Pancreas (tissue), 10 donors: ENCODE measurements at regions of chr10 and their contacts with region 1.

Region 1: GRCh38 chr10:30783939-30784500 is 154.5 kb upstream of the LYZL2 start:
- DNase-seq: peak in 5 of 6 donors; percentile 47 to 88 (median 71)
- ATAC-seq: peak; percentile 76 to 93 (median 88)
- H3K4me3 ChIP-seq: peak overlapping the region in 2 of 4 donors; percentile 59 to 74
- H3K27ac ChIP-seq: peak overlapping the region in 3 of 4 donors; percentile 6 to 88 (median 82)
- H3K4me1 ChIP-seq: peaks cover 0 to 5% (median 0%) of the 10 kb centered on the region in 3 donors
- H3K27me3 ChIP-seq: no peaks in the 10 kb centered on the region
- CTCF ChIP-seq: peak; percentile 24 to 74 (median 63)

Region 2: GRCh38 chr10:31479752-31480151 is 695.7 kb after region 1 on chr10:
- intact Hi-C with region 1: loop called in 1 of 3 experiments (anchors 10 kb)
- DNase-seq: no peak
- ATAC-seq: no peak
- H3K4me3 ChIP-seq: no peak overlapping the region
- H3K27ac ChIP-seq: no peak overlapping the region
- H3K4me1 ChIP-seq: peaks cover 0 to 8% (median 6%) of the 10 kb centered on the region in 3 donors
- H3K27me3 ChIP-seq: no peaks in the 10 kb centered on the region
- CTCF ChIP-seq: no peak